ENCODE measurements at regions of chr6 and their contacts with region 1.

Region 1: DNA sequence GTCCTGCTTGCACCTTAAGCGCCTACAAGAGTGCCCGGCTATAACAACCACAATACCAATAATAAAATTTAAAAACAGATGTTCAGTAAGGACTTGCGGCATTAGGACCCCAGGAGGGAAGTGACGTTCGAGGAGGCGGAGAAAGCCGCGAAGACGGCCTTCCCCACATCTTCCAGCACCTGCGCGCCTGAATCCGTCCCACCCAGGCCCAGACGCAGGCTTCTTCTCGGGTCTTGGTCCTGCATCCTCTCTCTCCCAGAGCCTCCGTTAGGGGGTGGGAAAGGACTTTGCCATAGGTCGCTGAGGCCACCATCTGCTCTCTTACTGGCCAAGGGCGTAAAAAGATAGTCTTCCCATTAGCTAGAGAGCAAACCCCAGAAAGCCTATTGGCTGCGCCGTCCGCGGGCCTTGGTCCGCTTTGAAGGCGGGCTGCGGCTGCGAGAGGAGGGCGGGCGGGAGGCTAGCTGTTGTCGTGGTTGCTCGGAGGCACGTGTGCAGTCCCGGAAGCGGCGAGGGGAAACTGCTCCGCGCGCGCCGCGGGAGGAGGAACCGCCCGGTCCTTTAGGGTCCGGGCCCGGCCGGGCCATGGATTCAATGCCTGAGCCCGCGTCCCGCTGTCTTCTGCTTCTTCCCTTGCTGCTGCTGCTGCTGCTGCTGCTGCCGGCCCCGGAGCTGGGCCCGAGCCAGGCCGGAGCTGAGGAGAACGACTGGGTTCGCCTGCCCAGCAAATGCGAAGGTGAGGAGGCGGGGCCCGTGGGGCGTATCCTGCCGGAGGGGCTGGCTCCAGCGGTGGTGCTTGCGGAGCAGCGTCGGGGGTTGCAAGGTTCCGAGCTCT is at the start of gene CNPY3:
- DNase-seq: peak; percentile 98
- H3K4me3 Mint-ChIP-seq: peak within 1 kb of the TSS; percentile 96
- H3K27ac Mint-ChIP-seq: peak within 1 kb of the TSS; percentile 99
- H3K4me1 Mint-ChIP-seq: peaks cover 38% of the 10 kb centered on the region
- H3K27me3 Mint-ChIP-seq: no peaks in the 10 kb centered on the region
- total RNA-seq, gene CNPY3: 32.2 to 37.6 TPM

Region 2: DNA sequence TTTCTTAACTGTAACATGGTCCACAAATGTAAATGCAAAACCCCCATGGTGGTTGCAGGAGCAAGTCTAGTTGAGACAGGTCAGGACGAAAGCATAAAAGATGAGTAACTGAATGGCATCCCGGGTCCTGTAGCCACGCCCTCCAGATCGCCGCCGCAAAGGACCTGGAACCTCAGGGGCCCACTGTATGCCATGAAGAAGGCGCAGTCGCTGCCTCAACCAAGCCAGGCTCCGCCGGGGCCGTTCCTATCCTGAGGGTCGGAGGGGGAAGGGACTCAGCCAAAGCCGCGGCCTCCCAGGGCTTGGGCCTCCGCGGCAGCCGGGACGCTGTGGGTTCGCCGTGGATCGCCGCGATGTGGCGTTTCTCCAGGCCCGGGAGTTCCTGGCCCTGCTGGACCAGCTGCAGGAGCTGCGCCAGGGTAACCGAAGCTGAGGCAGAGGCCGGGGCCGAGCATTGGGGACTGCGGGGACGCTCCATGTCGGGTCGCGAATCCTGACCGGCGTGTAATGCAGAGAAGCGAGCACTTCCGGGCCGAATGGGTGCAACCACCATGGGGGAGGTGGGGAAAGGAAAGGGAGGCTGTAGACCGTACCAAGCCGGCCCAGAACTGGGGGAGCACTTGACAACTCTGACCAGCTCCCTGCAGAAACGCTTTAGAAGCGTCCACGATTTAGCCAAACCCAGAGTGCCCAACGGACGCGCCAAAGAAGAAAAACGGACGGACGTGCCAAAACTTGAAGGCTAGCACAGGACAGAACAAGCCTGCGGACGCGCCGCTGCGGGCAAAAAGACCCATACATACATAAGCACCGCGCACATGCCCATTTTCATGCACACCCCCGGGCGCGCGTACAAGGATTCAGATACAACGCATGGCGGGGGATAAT is 38.6 kb before region 1 on chr6:
- CTCF ChIA-PET with region 1: no interaction called
- POLR2A ChIA-PET with region 1: interaction called, 4 read pairs
- intact Hi-C with region 1: loop called (anchors 1 kb)
- DNase-seq: peak; percentile 96
- H3K4me3 Mint-ChIP-seq: peak overlapping the region; percentile 88
- H3K27ac Mint-ChIP-seq: peak overlapping the region; percentile 94
- H3K4me1 Mint-ChIP-seq: peaks cover 25% of the 10 kb centered on the region
- H3K27me3 Mint-ChIP-seq: no peaks in the 10 kb centered on the region

Region 3: DNA sequence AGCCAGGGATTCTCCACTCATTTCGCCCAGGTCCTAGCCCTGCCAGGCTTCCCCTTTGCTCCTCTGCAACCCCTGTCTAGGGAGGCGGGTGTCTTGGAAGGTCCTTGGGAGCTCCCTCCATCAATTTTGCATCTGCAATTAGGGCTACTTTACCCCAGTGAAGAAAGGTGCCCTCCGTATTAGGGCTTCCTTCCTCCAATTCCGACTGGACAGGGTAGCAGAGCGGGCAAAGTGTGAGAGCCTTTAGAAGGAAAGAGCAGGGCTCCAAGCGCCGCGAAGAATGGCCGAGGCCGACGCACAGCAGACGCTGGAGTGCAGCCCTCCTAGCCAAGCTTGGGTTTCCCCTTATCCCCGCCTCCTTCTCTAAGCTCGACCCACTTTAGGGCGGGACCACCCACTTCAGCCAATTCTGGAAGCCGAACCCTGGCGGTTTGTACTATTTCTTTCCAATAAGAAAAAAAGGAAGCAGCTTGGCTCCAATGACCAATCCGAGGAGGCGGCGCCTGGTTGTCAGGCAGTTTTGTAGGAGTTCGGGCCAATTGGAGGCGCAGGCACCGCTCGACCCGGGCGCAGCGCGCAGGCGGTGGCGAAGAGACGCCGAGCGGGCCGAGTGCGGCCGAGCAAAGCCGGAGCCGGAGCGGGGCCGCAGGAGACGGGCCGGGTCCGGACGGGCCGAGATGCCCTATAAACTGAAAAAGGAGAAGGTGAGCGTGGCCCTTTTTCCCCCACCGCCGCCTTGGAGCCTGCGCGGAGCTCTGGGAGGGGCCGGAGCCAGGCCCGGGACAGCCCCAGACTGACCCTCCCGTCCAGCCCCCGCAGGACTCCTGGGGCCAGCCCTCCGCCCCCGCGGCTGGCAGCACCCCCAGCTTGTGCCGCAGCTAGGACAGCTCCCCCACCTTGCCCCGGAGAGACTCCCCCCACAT is 55.1 kb after region 1 on chr6 and contains the start of gene PPP2R5D:
- CTCF ChIA-PET with region 1: interaction called, 11 read pairs
- POLR2A ChIA-PET with region 1: interaction called, 30 read pairs
- intact Hi-C with region 1: loop called (anchors 1 kb)
- DNase-seq: peak; percentile 99
- H3K4me3 Mint-ChIP-seq: peak within 1 kb of the TSS; percentile 85
- H3K27ac Mint-ChIP-seq: peak within 1 kb of the TSS; percentile 85
- H3K4me1 Mint-ChIP-seq: peaks cover 56% of the 10 kb centered on the region
- H3K27me3 Mint-ChIP-seq: no peaks in the 10 kb centered on the region
- total RNA-seq, gene PPP2R5D: 59.1 to 60.2 TPM

Region 4: DNA sequence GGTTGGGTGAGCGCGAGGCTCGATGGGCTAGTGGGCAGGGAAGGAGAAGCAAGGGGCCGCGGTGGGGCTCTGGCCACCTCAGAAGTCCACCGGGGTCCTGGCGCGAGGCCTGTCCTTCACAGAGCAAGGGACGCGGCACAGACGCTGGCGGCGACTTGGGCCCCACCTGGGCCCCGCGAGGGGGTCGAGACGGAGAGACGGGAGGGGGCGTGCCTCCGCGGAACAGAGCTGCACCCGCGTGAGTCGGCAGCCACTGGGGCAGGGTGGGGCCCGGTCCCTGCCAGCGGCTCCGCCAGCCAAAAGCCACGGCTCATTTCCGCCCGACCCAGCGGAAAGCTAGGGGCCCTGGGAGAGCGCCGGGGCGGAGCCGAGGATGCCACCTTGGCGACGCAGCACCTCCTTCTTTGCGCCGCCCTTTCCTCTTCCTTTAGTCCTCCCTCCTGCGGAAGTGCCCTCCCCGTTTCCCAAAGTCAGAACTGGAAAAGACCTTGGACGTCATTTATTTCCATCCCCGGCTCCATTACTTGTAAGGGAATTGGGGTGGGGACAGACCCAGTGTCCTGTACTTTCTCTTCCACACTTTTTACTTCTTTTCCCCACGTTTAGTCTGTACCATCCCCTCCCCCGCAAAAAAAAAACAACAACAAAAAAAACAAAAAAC is 124.5 kb after region 1 on chr6 and contains the start of gene CUL7:
- CTCF ChIA-PET with region 1: no interaction called
- POLR2A ChIA-PET with region 1: interaction called, 5 read pairs
- intact Hi-C with region 1: loop called (anchors 1 kb)
- DNase-seq: peak; percentile 96
- H3K4me3 Mint-ChIP-seq: peak within 1 kb of the TSS; percentile 98
- H3K27ac Mint-ChIP-seq: peak within 1 kb of the TSS; percentile 95
- H3K4me1 Mint-ChIP-seq: peaks cover 44% of the 10 kb centered on the region
- H3K27me3 Mint-ChIP-seq: no peaks in the 10 kb centered on the region
- total RNA-seq, gene CUL7: 23.2 to 23.8 TPM

Region 5: GRCh38 chr6:43228951-43229802 is 300.0 kb after region 1 on chr6 and contains the start of gene DNPH1:
- CTCF ChIA-PET with region 1: no interaction called
- POLR2A ChIA-PET with region 1: no interaction called
- intact Hi-C with region 1: loop called (anchors 2 kb)
- DNase-seq: peak; percentile 86
- H3K4me3 Mint-ChIP-seq: peak within 1 kb of the TSS; percentile 89
- H3K27ac Mint-ChIP-seq: peak within 1 kb of the TSS; percentile 82
- H3K4me1 Mint-ChIP-seq: peaks cover 42% of the 10 kb centered on the region
- H3K27me3 Mint-ChIP-seq: no peaks in the 10 kb centered on the region
- total RNA-seq, gene DNPH1: 57.5 to 57.9 TPM

Region 6: GRCh38 chr6:43516697-43517504 is 587.7 kb after region 1 on chr6 and contains the starts of genes POLR1C and YIPF3:
- CTCF ChIA-PET with region 1: no interaction called
- POLR2A ChIA-PET with region 1: no interaction called
- intact Hi-C with region 1: loop called (anchors 1 kb)
- DNase-seq: peak; percentile 99
- H3K4me3 Mint-ChIP-seq: no peak within 1 kb of the TSS
- H3K27ac Mint-ChIP-seq: no peak within 1 kb of the TSS
- H3K4me1 Mint-ChIP-seq: peaks cover 25% of the 10 kb centered on the region
- H3K27me3 Mint-ChIP-seq: no peaks in the 10 kb centered on the region
- total RNA-seq, gene POLR1C: 46.8 to 49.5 TPM
- total RNA-seq, gene YIPF3: 38.3 to 39.3 TPM